ENCODE measurements at regions of chr10 and their contacts with region 1.

Region 1: GRCh38 chr10:73956476-73957359 is 41.2 kb upstream of the VCL start:
- DNase-seq: peak; percentile 36
- ATAC-seq: peak; percentile 58
- H3K4me3 Mint-ChIP-seq: peak overlapping the region; percentile 67
- H3K27ac Mint-ChIP-seq: peak overlapping the region; percentile 95
- H3K4me1 Mint-ChIP-seq: peaks cover 55% of the 10 kb centered on the region
- H3K27me3 Mint-ChIP-seq: no peaks in the 10 kb centered on the region
- CTCF ChIP-seq: no peak

Region 2: DNA sequence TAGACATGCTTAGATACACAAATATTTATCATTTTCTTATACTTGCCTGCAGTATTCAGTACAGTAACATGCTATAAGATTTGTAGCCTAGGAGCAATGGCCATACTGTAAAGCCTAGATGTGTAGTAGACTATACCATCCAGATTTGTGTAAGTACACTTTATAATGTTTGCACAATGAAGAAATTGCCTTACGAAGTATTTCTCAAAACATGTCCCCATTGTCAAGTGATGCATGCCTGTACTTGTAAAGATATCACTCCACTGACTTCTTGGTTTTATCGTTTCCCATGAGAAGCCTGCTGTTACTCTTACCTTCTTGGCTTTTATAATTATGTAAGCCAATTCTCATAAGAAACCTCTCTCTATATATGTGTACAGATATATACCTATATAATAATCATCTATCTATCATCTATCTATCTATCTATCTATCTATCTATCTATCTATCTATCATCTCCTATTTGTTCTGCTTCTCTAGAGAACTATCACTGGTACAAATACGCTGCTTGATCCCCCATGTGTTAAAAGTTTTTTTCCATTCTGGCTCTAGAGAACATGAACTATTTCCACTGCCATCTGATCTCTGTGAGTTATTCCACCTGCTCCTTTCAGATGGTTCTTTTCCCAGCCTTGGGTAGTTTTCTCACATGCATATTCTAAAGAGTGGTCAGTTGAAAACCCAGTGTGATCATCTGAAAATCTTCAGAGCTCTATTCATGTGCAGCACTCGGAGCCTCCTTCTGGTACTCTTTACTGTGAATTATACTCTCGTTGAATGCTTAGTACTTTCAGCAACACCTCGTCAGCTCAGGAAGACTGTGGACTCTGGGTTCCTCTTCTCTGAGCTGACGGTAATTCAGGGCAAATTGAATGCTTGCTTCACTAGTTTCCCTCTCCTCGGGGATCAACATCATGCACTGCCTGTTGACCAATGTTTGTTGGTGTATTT is 26.7 kb after region 1 on chr10:
- CTCF ChIA-PET with region 1: interaction called, 4 read pairs
- POLR2A ChIA-PET with region 1: interaction called, 13 read pairs
- intact Hi-C with region 1: loop called (anchors 1 kb)
- DNase-seq: no peak
- ATAC-seq: peak; percentile 62
- H3K4me3 Mint-ChIP-seq: peak overlapping the region; percentile 40
- H3K27ac Mint-ChIP-seq: no peak overlapping the region
- H3K4me1 Mint-ChIP-seq: peaks cover 26% of the 10 kb centered on the region
- H3K27me3 Mint-ChIP-seq: no peaks in the 10 kb centered on the region
- CTCF ChIP-seq: no peak

Region 3: DNA sequence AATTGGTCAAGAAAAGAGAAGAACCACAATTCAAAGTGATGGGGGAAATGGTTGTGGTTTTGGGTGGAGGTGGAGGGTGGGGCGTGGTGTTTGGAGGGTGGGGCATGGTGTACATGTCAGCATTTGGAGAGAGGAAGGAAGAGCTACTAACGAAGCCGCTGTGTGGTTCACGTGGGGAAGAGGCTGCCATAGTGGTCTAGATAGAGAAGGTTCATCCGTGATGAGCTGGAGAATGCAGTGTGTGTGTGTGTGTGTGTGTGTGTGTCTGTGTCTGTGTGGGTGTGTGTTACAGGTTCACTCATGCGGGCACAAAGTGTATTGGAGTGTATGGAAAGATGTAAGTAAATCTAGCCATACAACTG is 35.1 kb after region 1 on chr10:
- CTCF ChIA-PET with region 1: interaction called, 4 read pairs
- POLR2A ChIA-PET with region 1: interaction called, 9 read pairs
- intact Hi-C with region 1: loop called (anchors 1 kb)
- DNase-seq: peak; percentile 32
- ATAC-seq: peak; percentile 99
- H3K4me3 Mint-ChIP-seq: peak overlapping the region; percentile 2
- H3K27ac Mint-ChIP-seq: peak overlapping the region; percentile 65
- H3K4me1 Mint-ChIP-seq: peaks cover 36% of the 10 kb centered on the region
- H3K27me3 Mint-ChIP-seq: no peaks in the 10 kb centered on the region
- CTCF ChIP-seq: no peak

Region 4: GRCh38 chr10:73997787-73998622 is 41.3 kb after region 1 on chr10 and contains the start of gene VCL:
- CTCF ChIA-PET with region 1: interaction called, 4 read pairs
- POLR2A ChIA-PET with region 1: interaction called, 9 read pairs
- intact Hi-C with region 1: loop called (anchors 1 kb)
- DNase-seq: peak; percentile 91
- ATAC-seq: peak; percentile 97
- H3K4me3 Mint-ChIP-seq: peak within 1 kb of the TSS; percentile 96
- H3K27ac Mint-ChIP-seq: peak within 1 kb of the TSS; percentile 95
- H3K4me1 Mint-ChIP-seq: peaks cover 45% of the 10 kb centered on the region
- H3K27me3 Mint-ChIP-seq: no peaks in the 10 kb centered on the region
- CTCF ChIP-seq: no peak
- total RNA-seq, gene VCL: 21.3 and 25.8 TPM in 2 replicates

Region 5: GRCh38 chr10:74058658-74059057 is 101.9 kb after region 1 on chr10:
- CTCF ChIA-PET with region 1: interaction called, 5 read pairs
- POLR2A ChIA-PET with region 1: no interaction called
- intact Hi-C with region 1: loop called (anchors 1 kb)
- DNase-seq: no peak
- ATAC-seq: peak; percentile 73
- H3K4me3 Mint-ChIP-seq: no peak overlapping the region
- H3K27ac Mint-ChIP-seq: no peak overlapping the region
- H3K4me1 Mint-ChIP-seq: peaks cover 24% of the 10 kb centered on the region
- H3K27me3 Mint-ChIP-seq: no peaks in the 10 kb centered on the region
- CTCF ChIP-seq: no peak

Region 6: GRCh38 chr10:74081192-74081803 is 124.6 kb after region 1 on chr10:
- CTCF ChIA-PET with region 1: interaction called, 15 read pairs
- POLR2A ChIA-PET with region 1: interaction called, 4 read pairs
- intact Hi-C with region 1: loop called (anchors 2 kb)
- DNase-seq: no peak
- ATAC-seq: peak; percentile 51
- H3K4me3 Mint-ChIP-seq: no peak overlapping the region
- H3K27ac Mint-ChIP-seq: no peak overlapping the region
- H3K4me1 Mint-ChIP-seq: peaks cover 44% of the 10 kb centered on the region
- H3K27me3 Mint-ChIP-seq: no peaks in the 10 kb centered on the region
- CTCF ChIP-seq: no peak

Region 7: DNA sequence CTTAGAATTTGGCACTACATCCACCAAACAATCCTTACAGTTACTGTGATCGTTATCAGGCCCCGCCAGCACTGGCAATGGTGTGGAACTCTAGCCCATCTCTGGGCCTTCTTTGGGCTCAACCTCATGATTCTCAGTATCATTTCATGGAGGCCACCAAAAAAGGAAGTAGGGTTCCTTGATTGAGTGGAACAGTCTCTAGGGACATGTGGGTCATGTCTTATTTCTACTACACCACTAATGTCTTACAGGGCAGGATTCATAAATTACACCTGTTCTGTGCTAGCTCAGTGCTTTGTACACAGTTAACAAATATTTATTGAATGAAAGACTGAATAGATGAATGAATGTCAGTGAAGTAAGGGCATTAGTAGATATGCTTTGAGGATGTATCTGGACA is 140.1 kb after region 1 on chr10:
- CTCF ChIA-PET with region 1: no interaction called
- POLR2A ChIA-PET with region 1: interaction called, 5 read pairs
- intact Hi-C with region 1: loop called (anchors 5 kb)
- DNase-seq: no peak
- ATAC-seq: peak; percentile 98
- H3K4me3 Mint-ChIP-seq: peak overlapping the region; percentile 28
- H3K27ac Mint-ChIP-seq: peak overlapping the region; percentile 78
- H3K4me1 Mint-ChIP-seq: peaks cover 22% of the 10 kb centered on the region
- H3K27me3 Mint-ChIP-seq: no peaks in the 10 kb centered on the region
- CTCF ChIP-seq: no peak